Caco-2 (cell line): ENCODE measurements at regions of chr16 and their contacts with region 1.

Region 1: GRCh38 chr16:66695935-66696668 is 441 bp downstream of the CMTM4 start:
- DNase-seq: peak; percentile 73 to 80
- H3K4me3 ChIP-seq: peak overlapping the region; percentile 80
- H3K4me3 Mint-ChIP-seq: peak overlapping the region; percentile 94
- H3K27ac Mint-ChIP-seq: peak overlapping the region; percentile 61
- H3K4me1 ChIP-seq: peaks cover 17% of the 10 kb centered on the region
- H3K4me1 Mint-ChIP-seq: peaks cover 21% of the 10 kb centered on the region
- H3K27me3 ChIP-seq: no peaks in the 10 kb centered on the region
- H3K27me3 Mint-ChIP-seq: no peaks in the 10 kb centered on the region
- CTCF ChIP-seq: no peak

Region 2: GRCh38 chr16:66650707-66651473 is 45.2 kb before region 1 on chr16:
- CTCF ChIA-PET with region 1: interaction called, 6 read pairs
- POLR2A ChIA-PET with region 1: no interaction called
- intact Hi-C with region 1: loop called (anchors 1 kb)
- DNase-seq: peak; percentile 75 to 86
- H3K4me3 ChIP-seq: no peak overlapping the region
- H3K4me3 Mint-ChIP-seq: peak overlapping the region; percentile 42
- H3K27ac Mint-ChIP-seq: no peak overlapping the region
- H3K4me1 ChIP-seq: peaks cover 19% of the 10 kb centered on the region; the same call in 1 of the 2 replicates
- H3K4me1 Mint-ChIP-seq: peaks cover 24% of the 10 kb centered on the region
- H3K27me3 ChIP-seq: no peaks in the 10 kb centered on the region
- H3K27me3 Mint-ChIP-seq: no peaks in the 10 kb centered on the region
- CTCF ChIP-seq: peak; percentile 92 to 96

Region 3: DNA sequence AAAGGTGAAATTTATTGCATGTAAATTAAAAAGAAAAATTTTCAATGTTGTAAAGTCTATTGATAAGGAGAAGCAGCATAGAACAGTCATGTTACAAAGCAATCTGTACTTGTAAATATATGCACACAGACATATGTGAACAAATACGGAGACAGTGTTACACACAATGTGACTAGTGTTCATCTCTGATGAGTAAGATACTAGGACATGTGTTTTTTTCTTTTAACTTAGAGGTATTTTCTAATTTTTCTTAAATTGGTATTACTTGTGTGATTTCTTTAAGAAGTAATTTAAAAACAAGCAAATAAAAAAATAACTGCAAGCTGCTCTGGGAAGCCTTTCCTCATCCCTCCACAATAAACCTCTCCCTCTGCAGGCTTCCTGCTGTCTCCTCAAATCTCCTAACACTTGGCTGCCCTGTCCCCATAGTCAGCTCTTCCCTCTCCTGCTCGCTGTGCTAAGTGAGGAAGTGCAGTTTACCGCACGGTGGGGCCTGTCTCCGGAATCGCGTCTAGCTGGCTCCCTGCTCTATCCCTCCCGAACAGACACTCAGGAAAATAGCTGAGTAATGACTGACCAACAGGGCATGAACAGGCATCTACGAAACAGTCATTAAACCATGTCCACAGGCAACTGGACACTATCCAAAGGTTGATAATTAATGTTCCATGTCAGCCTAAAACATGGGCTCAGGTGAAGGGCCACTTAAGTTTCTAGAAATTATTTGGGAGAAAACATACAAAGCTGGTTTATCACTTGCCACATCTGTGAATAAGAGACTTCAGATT is 35.5 kb before region 1 on chr16:
- CTCF ChIA-PET with region 1: interaction called, 6 read pairs
- POLR2A ChIA-PET with region 1: no interaction called
- intact Hi-C with region 1: loop called (anchors 2 kb)
- DNase-seq: no peak
- H3K4me3 ChIP-seq: no peak overlapping the region
- H3K4me3 Mint-ChIP-seq: no peak overlapping the region
- H3K27ac Mint-ChIP-seq: no peak overlapping the region
- H3K4me1 ChIP-seq: no peaks in the 10 kb centered on the region
- H3K4me1 Mint-ChIP-seq: peaks cover 6% of the 10 kb centered on the region
- H3K27me3 ChIP-seq: no peaks in the 10 kb centered on the region
- H3K27me3 Mint-ChIP-seq: no peaks in the 10 kb centered on the region
- CTCF ChIP-seq: no peak

Region 4: GRCh38 chr16:66717112-66717675 is 21.1 kb after region 1 on chr16:
- CTCF ChIA-PET with region 1: interaction called, 4 read pairs
- POLR2A ChIA-PET with region 1: interaction called, 6 read pairs
- intact Hi-C with region 1: loop called (anchors 1 kb)
- DNase-seq: peak; percentile 48 to 58
- H3K4me3 ChIP-seq: no peak overlapping the region
- H3K4me3 Mint-ChIP-seq: no peak overlapping the region
- H3K27ac Mint-ChIP-seq: no peak overlapping the region
- H3K4me1 ChIP-seq: peaks cover 23% of the 10 kb centered on the region
- H3K4me1 Mint-ChIP-seq: peaks cover 10% of the 10 kb centered on the region
- H3K27me3 ChIP-seq: no peaks in the 10 kb centered on the region
- H3K27me3 Mint-ChIP-seq: no peaks in the 10 kb centered on the region
- CTCF ChIP-seq: peak; percentile 38 to 65